ENCODE measurements at regions of chr1 and their contacts with region 1.

Region 1: DNA sequence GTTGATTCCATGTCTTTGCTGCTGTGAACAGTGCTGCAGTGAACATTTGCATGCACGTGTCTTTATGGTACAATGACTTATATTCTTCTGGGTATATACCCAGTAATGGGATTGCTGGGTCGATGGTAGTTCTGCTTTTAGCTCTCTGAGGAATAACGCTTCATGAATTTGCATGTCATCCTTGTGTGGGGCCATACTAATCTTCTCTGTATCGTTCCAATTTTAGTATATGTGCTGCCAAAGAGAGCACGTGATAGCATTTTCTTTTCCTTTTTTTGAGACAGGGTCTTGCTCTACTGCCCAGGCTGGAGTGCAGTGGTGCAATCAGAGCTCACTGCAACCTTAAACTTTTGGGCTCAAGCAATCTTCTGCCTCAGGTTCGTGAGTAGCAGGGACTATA is 24.9 kb upstream of the MAP1LC3C start:
- DNase-seq: no peak
- ATAC-seq: no peak
- H3K4me3 ChIP-seq: no peak overlapping the region
- H3K27ac ChIP-seq: no peak overlapping the region
- H3K4me1 ChIP-seq: no peaks in the 10 kb centered on the region
- H3K27me3 ChIP-seq: no peaks in the 10 kb centered on the region
- CTCF ChIP-seq: no peak
- EP300 ChIP-seq: no peak
- POLR2A ChIP-seq: no peak
- RAD21 ChIP-seq: no peak

Region 2: GRCh38 chr1:241972703-241973369 is 51.0 kb before region 1 on chr1:
- CTCF ChIA-PET with region 1: no interaction called
- POLR2A ChIA-PET with region 1: no interaction called
- RAD21 ChIA-PET with region 1: no interaction called
- SMC1A ChIA-PET with region 1: no interaction called
- in situ Hi-C with region 1: no loop called
- intact Hi-C with region 1: no loop called
- DNase-seq: no peak
- ATAC-seq: no peak
- H3K4me3 ChIP-seq: no peak overlapping the region
- H3K27ac ChIP-seq: no peak overlapping the region
- H3K4me1 ChIP-seq: no peaks in the 10 kb centered on the region
- H3K27me3 ChIP-seq: no peaks in the 10 kb centered on the region
- CTCF ChIP-seq: no peak
- EP300 ChIP-seq: no peak
- POLR2A ChIP-seq: no peak
- RAD21 ChIP-seq: no peak

Region 3: DNA sequence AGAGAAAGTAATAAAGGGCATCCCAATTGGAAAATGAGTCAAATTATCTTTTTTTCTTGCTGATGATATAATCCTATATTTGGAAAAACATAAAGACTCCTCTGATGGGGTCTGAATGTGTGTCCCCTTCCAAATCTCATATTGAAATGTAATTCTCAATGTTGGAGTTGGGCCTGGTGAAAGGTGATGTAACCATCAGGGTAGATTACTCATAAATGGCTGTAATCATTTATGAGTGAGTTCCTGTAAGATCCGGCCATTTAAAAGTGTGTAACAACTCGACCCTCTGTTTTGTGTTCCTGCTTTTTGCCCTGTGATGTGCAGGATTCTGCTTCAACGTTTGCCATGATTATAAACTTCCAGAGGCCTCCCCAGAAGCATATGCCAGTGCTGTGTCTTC is 19.4 kb after region 1 on chr1:
- CTCF ChIA-PET with region 1: no interaction called
- POLR2A ChIA-PET with region 1: no interaction called
- RAD21 ChIA-PET with region 1: no interaction called
- SMC1A ChIA-PET with region 1: no interaction called
- in situ Hi-C with region 1: no loop called
- intact Hi-C with region 1: no loop called
- DNase-seq: no peak
- ATAC-seq: no peak
- H3K4me3 ChIP-seq: no peak overlapping the region
- H3K27ac ChIP-seq: no peak overlapping the region
- H3K4me1 ChIP-seq: no peaks in the 10 kb centered on the region
- H3K27me3 ChIP-seq: no peaks in the 10 kb centered on the region
- CTCF ChIP-seq: no peak
- EP300 ChIP-seq: no peak
- POLR2A ChIP-seq: no peak
- RAD21 ChIP-seq: no peak

Region 4: GRCh38 chr1:242128951-242129502 is 105.2 kb after region 1 on chr1:
- CTCF ChIA-PET with region 1: no interaction called
- POLR2A ChIA-PET with region 1: no interaction called
- RAD21 ChIA-PET with region 1: no interaction called
- SMC1A ChIA-PET with region 1: no interaction called
- in situ Hi-C with region 1: no loop called
- intact Hi-C with region 1: loop called (anchors 5 kb)
- DNase-seq: no peak
- ATAC-seq: peak; percentile 78
- H3K4me3 ChIP-seq: no peak overlapping the region
- H3K27ac ChIP-seq: no peak overlapping the region
- H3K4me1 ChIP-seq: no peaks in the 10 kb centered on the region
- H3K27me3 ChIP-seq: no peaks in the 10 kb centered on the region
- CTCF ChIP-seq: peak; percentile 14 to 27 (median 17); a peak in 3 of 6 replicates
- EP300 ChIP-seq: no peak
- POLR2A ChIP-seq: no peak
- RAD21 ChIP-seq: peak; percentile 21; the same call in 1 of the 2 replicates